Naive thymus-derived CD4-positive, alpha-beta T cell (primary cell): ENCODE measurements at regions of chr19 and their contacts with region 1.

Region 1: DNA sequence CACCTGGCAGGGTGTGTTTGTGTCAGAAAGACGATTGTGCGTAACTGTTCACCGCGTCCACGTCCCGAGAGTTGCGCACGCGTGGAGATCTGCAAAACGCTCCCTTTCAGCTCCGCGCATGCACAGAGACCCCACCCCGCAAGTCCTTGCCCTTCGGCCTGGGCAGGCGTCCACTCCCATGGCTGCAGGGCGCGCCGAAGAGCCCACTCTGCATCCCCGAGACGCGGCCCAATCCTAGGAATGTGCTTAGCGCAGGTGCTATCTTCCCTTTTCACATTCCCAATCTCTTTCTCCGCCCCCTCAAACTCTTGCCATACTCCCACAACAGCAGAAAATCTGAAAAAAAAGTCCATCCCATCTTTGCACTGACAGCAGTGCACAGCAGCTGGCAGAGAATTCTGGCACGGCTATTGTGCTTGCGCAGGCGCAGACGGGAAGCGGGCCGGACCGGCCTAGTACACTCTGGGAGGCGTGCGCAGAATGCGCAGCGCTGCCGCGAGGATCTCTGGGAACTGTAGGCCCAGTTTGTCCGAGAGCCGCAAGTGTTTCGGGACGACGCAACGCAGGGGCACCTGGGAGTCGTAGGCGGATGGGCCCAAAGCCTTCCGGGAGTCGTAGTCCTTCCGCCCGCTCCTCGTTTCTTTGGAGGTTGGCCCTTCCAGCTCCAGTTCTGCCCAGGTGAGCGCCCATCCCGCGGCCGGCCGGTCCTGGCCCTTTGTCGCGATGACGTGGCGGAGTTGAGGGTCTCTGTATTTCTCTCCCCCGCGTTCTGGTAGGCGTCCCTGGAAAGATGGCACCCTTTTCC is 23.1 kb downstream of the ZNF175 start:
- DNase-seq: peak; percentile 87 to 95 (median 91)
- ATAC-seq: peak; percentile 100
- H3K4me3 ChIP-seq: peak overlapping the region; percentile 88
- H3K4me3 Mint-ChIP-seq: peak overlapping the region; percentile 88 to 99 (median 96)
- H3K27ac ChIP-seq: peak overlapping the region; percentile 66
- H3K27ac Mint-ChIP-seq: peak overlapping the region; percentile 29 to 97 (median 78)
- H3K4me1 ChIP-seq: peaks cover 6 to 17% of the 10 kb centered on the region in 2 donors
- H3K4me1 Mint-ChIP-seq: peaks cover 19 to 37% (median 24%) of the 10 kb centered on the region in 7 donors
- H3K27me3 ChIP-seq: no peaks in the 10 kb centered on the region
- H3K27me3 Mint-ChIP-seq: peaks cover 0 to 23% (median 15%) of the 10 kb centered on the region in 5 donors

Region 2: GRCh38 chr19:50329146-50329925 is 1264.8 kb before region 1 on chr19 and contains the start of gene KCNC3:
- CTCF ChIA-PET with region 1: no interaction called
- POLR2A ChIA-PET with region 1: no interaction called
- intact Hi-C with region 1: loop called in 1 of 2 experiments (anchors 2 kb)
- DNase-seq: peak in 8 of 9 donors; percentile 69 to 96 (median 86)
- ATAC-seq: peak; percentile 77
- H3K4me3 ChIP-seq: peak within 1 kb of the TSS; percentile 39
- H3K4me3 Mint-ChIP-seq: peak within 1 kb of the TSS; percentile 72 to 97 (median 86)
- H3K27ac ChIP-seq: no peak within 1 kb of the TSS
- H3K27ac Mint-ChIP-seq: peak within 1 kb of the TSS; percentile 55 to 96 (median 87)
- H3K4me1 ChIP-seq: peaks cover 42 to 62% of the 10 kb centered on the region in 2 donors
- H3K4me1 Mint-ChIP-seq: peaks cover 43 to 75% (median 73%) of the 10 kb centered on the region in 7 donors
- H3K27me3 ChIP-seq: peaks cover 15 to 28% of the 10 kb centered on the region in 2 donors
- H3K27me3 Mint-ChIP-seq: peaks cover 20 to 62% (median 41%) of the 10 kb centered on the region in 5 donors
- total RNA-seq, gene KCNC3: 1.9 to 11.1 (median 2.4) TPM

Region 3: DNA sequence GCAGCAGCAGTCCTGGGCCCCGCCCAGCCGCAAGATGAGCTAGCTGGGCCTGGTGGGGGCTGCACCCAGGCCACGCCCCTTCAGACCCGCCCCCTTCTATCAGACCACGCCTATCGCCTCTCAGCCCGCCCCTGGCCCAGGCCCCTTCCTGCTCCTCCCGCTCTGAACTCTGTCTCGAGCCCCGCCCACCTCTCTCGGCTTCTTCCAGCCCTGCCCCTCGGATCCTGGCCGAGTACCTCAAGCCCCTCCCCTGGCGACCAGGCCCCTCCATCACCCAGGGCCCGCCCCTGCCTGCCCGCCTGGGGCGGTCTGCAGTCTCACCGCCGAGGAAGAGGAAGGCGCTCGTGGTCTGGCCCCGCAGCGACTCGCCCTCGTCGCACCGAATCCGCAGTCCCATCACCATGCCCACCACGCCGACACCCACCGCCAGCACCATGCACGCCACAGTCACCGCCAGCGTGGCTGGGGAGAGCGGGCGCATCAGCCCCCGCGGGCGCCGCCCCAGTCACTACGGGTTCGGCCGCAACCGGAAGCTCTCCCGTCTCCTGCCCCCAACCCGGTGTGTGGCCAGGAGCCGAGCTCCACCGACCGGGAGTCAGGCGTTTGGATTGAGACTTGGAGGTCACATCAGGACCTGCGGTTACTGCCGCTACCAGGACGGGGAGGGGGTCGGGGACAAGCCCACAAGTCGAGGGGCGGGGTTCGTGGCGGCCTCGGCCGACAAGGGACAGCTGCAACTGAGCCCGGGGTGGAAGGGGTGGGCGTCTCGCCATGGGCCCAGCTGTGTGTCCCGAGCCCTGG is 226.4 kb before region 1 on chr19:
- CTCF ChIA-PET with region 1: no interaction called
- POLR2A ChIA-PET with region 1: no interaction called
- intact Hi-C with region 1: loop called in 1 of 2 experiments (anchors 1 kb)
- DNase-seq: peak; percentile 84 to 100 (median 90)
- ATAC-seq: peak; percentile 93
- H3K4me3 ChIP-seq: peak overlapping the region; percentile 96
- H3K4me3 Mint-ChIP-seq: peak overlapping the region; percentile 92 to 100 (median 98)
- H3K27ac ChIP-seq: peak overlapping the region; percentile 81
- H3K27ac Mint-ChIP-seq: peak overlapping the region; percentile 79 to 98 (median 95)
- H3K4me1 ChIP-seq: peaks cover 23 to 26% of the 10 kb centered on the region in 2 donors
- H3K4me1 Mint-ChIP-seq: peaks cover 53 to 81% (median 59%) of the 10 kb centered on the region in 7 donors
- H3K27me3 ChIP-seq: no peaks in the 10 kb centered on the region
- H3K27me3 Mint-ChIP-seq: no peaks in the 10 kb centered on the region

Region 4: GRCh38 chr19:51422053-51422448 is 172.1 kb before region 1 on chr19:
- CTCF ChIA-PET with region 1: no interaction called
- POLR2A ChIA-PET with region 1: no interaction called
- intact Hi-C with region 1: no loop called
- DNase-seq: peak; percentile 41 to 96 (median 61)
- ATAC-seq: peak; percentile 90
- H3K4me3 ChIP-seq: no peak overlapping the region
- H3K4me3 Mint-ChIP-seq: peak overlapping the region in 3 of 10 donors; percentile 4 to 12 (median 8)
- H3K27ac ChIP-seq: no peak overlapping the region
- H3K27ac Mint-ChIP-seq: peak overlapping the region in 1 of 9 donors; percentile 2
- H3K4me1 ChIP-seq: no peaks in the 10 kb centered on the region
- H3K4me1 Mint-ChIP-seq: peaks cover 0 to 11% (median 0%) of the 10 kb centered on the region in 7 donors
- H3K27me3 ChIP-seq: no peaks in the 10 kb centered on the region
- H3K27me3 Mint-ChIP-seq: peaks cover 19 to 40% (median 31%) of the 10 kb centered on the region in 5 donors

Region 5: DNA sequence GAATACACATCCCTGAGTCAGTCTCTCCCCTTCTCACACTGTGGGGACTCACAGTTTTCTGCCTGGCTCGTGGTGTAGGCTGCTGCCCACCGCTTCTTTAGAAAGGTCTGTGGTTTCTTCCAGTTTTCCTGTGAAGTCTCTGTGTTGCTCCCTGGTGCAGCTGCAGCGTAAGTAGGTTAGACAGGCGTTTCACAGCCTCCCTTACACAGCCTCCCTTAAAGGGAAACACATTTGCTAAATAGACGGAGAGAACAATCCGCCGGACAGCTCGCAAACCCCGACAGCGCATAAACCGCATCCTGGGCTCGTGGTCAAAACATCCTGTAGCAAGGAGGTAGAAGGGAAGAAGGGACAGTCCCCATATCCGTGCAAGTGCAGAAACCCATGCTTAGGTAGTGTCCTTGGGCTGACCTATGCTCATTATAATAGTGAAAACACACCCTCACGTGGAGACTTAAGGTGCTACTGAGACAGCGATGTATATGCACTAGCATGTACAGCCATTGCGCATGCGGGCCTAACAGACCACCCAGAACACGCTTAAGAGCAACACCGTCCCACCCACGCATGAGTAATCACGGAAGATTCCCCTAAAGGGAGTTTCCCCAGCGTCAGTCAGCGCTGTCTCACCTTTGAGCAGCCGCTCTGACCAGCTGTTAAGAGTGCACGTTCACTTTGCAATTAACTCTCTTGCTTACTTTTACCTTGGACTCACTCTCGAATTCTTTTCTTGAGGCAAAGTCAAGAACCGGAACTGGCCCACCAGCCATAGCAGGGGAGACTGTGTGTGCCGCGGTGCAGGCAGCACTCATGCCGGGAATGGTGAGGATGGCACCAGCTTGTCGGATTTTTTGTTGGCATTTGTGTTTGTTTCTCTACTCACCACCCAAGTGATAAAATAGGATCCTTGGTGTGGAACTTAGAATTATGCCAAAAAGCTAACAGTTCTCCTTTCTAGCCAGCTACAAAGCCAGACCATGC is 152.5 kb before region 1 on chr19:
- CTCF ChIA-PET with region 1: no interaction called
- POLR2A ChIA-PET with region 1: no interaction called
- intact Hi-C with region 1: loop called (anchors 1 kb)
- DNase-seq: peak; percentile 27 to 87 (median 68)
- ATAC-seq: peak; percentile 91
- H3K4me3 ChIP-seq: peak overlapping the region; percentile 31
- H3K4me3 Mint-ChIP-seq: peak overlapping the region; percentile 74 to 92 (median 83)
- H3K27ac ChIP-seq: peak overlapping the region; percentile 53
- H3K27ac Mint-ChIP-seq: peak overlapping the region; percentile 49 to 88 (median 77)
- H3K4me1 ChIP-seq: peaks cover 22 to 24% of the 10 kb centered on the region in 2 donors
- H3K4me1 Mint-ChIP-seq: peaks cover 22 to 43% (median 34%) of the 10 kb centered on the region in 7 donors
- H3K27me3 ChIP-seq: peaks cover 0 to 4% of the 10 kb centered on the region in 2 donors
- H3K27me3 Mint-ChIP-seq: peaks cover 0 to 59% (median 5%) of the 10 kb centered on the region in 5 donors

Region 6: GRCh38 chr19:51688672-51689571 is 94.8 kb after region 1 on chr19:
- CTCF ChIA-PET with region 1: no interaction called
- POLR2A ChIA-PET with region 1: no interaction called
- intact Hi-C with region 1: loop called in 1 of 2 experiments (anchors 5 kb)
- DNase-seq: peak in 1 of 9 donors; percentile 37
- ATAC-seq: no peak
- H3K4me3 ChIP-seq: no peak overlapping the region
- H3K4me3 Mint-ChIP-seq: peak overlapping the region; percentile 86 to 99 (median 92)
- H3K27ac ChIP-seq: peak overlapping the region; percentile 93
- H3K27ac Mint-ChIP-seq: peak overlapping the region; percentile 48 to 91 (median 78)
- H3K4me1 ChIP-seq: peaks cover 0 to 5% of the 10 kb centered on the region in 2 donors
- H3K4me1 Mint-ChIP-seq: peaks cover 17 to 27% (median 23%) of the 10 kb centered on the region in 7 donors
- H3K27me3 ChIP-seq: no peaks in the 10 kb centered on the region
- H3K27me3 Mint-ChIP-seq: peaks cover 0 to 27% (median 5%) of the 10 kb centered on the region in 5 donors

Region 7: GRCh38 chr19:51904331-51905165 is 310.4 kb after region 1 on chr19 and contains the start of gene ZNF649:
- CTCF ChIA-PET with region 1: no interaction called
- POLR2A ChIA-PET with region 1: no interaction called
- intact Hi-C with region 1: loop called (anchors 1 to 2 kb)
- DNase-seq: peak; percentile 67 to 84 (median 74)
- ATAC-seq: peak; percentile 98
- H3K4me3 ChIP-seq: peak within 1 kb of the TSS; percentile 84
- H3K4me3 Mint-ChIP-seq: peak within 1 kb of the TSS; percentile 87 to 100 (median 99)
- H3K27ac ChIP-seq: peak within 1 kb of the TSS; percentile 84
- H3K27ac Mint-ChIP-seq: peak within 1 kb of the TSS; percentile 89 to 99 (median 97)
- H3K4me1 ChIP-seq: peaks cover 0 to 5% of the 10 kb centered on the region in 2 donors
- H3K4me1 Mint-ChIP-seq: peaks cover 8 to 33% (median 28%) of the 10 kb centered on the region in 7 donors
- H3K27me3 ChIP-seq: no peaks in the 10 kb centered on the region
- H3K27me3 Mint-ChIP-seq: peaks cover 0 to 31% (median 19%) of the 10 kb centered on the region in 5 donors
- total RNA-seq, gene ZNF649: 11.1 to 33.4 (median 14.5) TPM